Calu3 (cell line): ENCODE measurements at regions of chr6 and their contacts with region 1.

Region 1: GRCh38 chr6:18491308-18492045 is 104.3 kb downstream of the RNF144B start:
- DNase-seq: peak; percentile 17
- H3K4me3 Mint-ChIP-seq: no peak overlapping the region
- H3K27ac Mint-ChIP-seq: no peak overlapping the region
- H3K4me1 Mint-ChIP-seq: peaks cover 76% of the 10 kb centered on the region
- H3K27me3 Mint-ChIP-seq: no peaks in the 10 kb centered on the region
- CTCF ChIP-seq: no peak

Region 2: DNA sequence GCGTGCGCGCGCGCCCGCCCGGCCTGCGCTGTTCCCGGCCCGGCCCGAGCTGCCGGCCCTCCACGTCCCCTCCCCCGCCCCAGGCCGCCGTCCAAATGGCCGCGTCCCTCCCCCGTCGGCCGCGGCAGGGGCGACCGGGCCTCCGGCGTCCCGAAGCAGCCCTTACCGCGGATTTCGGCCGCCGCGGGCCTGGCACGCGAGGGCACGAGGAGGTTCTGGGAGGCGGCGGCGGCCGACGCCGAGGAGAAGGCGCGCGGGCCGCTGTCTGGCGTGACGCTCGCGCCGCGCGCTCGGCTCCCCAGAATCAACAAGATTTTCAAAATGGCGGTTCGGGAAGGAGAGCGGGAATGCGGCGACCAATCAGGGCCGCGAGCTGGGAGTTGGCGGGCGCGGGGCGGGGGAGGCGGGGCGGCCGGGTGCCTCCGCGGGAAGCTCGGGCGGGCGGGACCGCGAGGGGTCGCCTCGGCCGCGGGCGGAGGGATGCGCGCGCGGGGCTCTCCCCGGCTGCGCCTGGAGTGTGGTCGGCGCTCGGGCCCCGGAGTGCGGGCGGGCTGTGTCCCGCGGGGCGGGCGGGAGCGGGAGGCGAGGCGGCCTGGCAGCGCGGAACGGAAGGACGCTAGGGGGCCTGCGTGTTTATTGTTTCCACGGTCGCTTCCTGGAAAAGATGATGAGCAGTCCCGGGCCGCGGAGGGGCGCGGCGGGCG is 227.1 kb before region 1 on chr6 and contains the start of gene DEK:
- CTCF ChIA-PET with region 1: no interaction called
- intact Hi-C with region 1: loop called (anchors 5 kb)
- DNase-seq: peak; percentile 72
- H3K4me3 Mint-ChIP-seq: peak within 1 kb of the TSS; percentile 79
- H3K27ac Mint-ChIP-seq: peak within 1 kb of the TSS; percentile 68
- H3K4me1 Mint-ChIP-seq: peaks cover 38% of the 10 kb centered on the region
- H3K27me3 Mint-ChIP-seq: no peaks in the 10 kb centered on the region
- CTCF ChIP-seq: no peak
- total RNA-seq, gene DEK: 96.2 and 108 TPM in 2 replicates

Region 3: GRCh38 chr6:18387061-18387721 is 104.3 kb before region 1 on chr6 and contains the start of gene RNF144B:
- CTCF ChIA-PET with region 1: no interaction called
- intact Hi-C with region 1: loop called (anchors 2 kb)
- DNase-seq: peak; percentile 78
- H3K4me3 Mint-ChIP-seq: peak within 1 kb of the TSS; percentile 96
- H3K27ac Mint-ChIP-seq: peak within 1 kb of the TSS; percentile 65
- H3K4me1 Mint-ChIP-seq: peaks cover 27% of the 10 kb centered on the region
- H3K27me3 Mint-ChIP-seq: no peaks in the 10 kb centered on the region
- CTCF ChIP-seq: no peak
- total RNA-seq, gene RNF144B: 7.4 and 12.1 TPM in 2 replicates

Region 4: DNA sequence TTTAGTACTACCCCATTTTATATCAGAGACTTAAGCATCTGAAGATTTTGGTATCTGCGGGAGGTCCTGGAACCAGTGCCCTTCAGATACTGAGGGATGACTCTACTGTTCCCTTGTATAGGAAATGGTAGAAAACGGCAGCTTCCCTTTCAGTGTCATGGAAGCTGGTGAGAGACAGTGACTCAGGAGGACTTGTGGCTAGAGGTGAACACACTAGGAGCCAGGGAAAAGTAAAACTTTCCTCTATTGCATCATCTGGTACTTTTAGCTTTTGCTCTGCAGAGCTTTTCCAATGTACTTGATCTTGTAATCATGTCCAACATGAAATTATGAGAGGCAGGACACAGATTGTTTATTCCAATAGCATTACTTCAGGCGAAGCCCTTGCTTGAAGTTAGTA is 59.3 kb before region 1 on chr6:
- CTCF ChIA-PET with region 1: no interaction called
- intact Hi-C with region 1: loop called (anchors 2 kb)
- DNase-seq: no peak
- H3K4me3 Mint-ChIP-seq: no peak overlapping the region
- H3K27ac Mint-ChIP-seq: peak overlapping the region; percentile 23
- H3K4me1 Mint-ChIP-seq: peaks cover 38% of the 10 kb centered on the region
- H3K27me3 Mint-ChIP-seq: no peaks in the 10 kb centered on the region
- CTCF ChIP-seq: no peak